Activated CD8-positive, alpha-beta T cell treated with anti-CD3 and anti-CD28 coated beads for 36 hours (primary cell): ENCODE measurements at regions of chr7 and their contacts with region 1.

Region 1: GRCh38 chr7:123692471-123692877 is 36.8 kb downstream of the LMOD2 start:
- DNase-seq: no peak
- ATAC-seq: no peak
- H3K4me3 Mint-ChIP-seq: no peak overlapping the region
- H3K27ac Mint-ChIP-seq: no peak overlapping the region
- H3K4me1 Mint-ChIP-seq: no peaks in the 10 kb centered on the region
- H3K27me3 Mint-ChIP-seq: no peaks in the 10 kb centered on the region
- CTCF ChIP-seq: no peak

Region 2: DNA sequence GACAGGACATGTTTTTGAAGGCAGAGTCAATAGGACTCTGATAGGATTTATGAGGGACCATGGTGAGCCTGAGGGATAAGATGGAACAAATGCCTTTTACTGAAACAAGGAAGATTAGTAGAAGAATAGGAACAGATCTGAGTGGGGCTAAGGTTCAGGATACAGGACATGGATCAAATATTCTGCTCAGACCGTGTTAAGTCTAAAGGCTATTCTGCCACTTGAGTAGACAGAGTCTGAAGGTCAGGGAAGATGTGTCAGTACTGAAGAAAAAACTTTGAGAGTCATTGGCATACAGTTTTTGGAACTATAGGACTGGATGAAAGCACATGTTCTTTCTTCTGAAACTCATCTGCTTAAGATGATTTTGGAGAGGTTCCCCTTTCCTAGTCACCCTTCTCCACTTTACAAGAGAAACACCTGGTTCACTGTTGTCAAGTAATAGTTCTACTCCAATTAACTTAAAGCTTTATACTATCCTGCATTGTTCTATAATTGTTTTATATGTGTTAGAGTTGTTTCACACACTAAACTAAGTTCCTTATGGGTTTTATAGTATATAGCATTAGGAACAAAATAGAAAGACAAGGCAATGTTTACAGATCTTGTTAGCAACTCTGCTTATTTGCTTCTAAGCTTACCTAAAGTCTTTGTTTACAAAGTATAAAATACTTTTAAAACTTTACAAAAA is 12.9 kb after region 1 on chr7:
- CTCF ChIA-PET with region 1: interaction called, 25 read pairs
- POLR2A ChIA-PET with region 1: no interaction called
- intact Hi-C with region 1: no loop called
- DNase-seq: no peak
- ATAC-seq: no peak
- H3K4me3 Mint-ChIP-seq: no peak overlapping the region
- H3K27ac Mint-ChIP-seq: peak overlapping the region; percentile 4
- H3K4me1 Mint-ChIP-seq: peaks cover under 1% of the 10 kb centered on the region
- H3K27me3 Mint-ChIP-seq: no peaks in the 10 kb centered on the region
- CTCF ChIP-seq: no peak